OCI-LY7 (cell line): ENCODE measurements at regions of chrX and their contacts with region 1.

Region 1: GRCh38 chrX:83008415-83008814 is 499.7 kb upstream of the POU3F4 start:
- DNase-seq: peak; percentile 37
- H3K4me3 ChIP-seq: no peak overlapping the region
- H3K27ac ChIP-seq: no peak overlapping the region
- H3K4me1 ChIP-seq: no peaks in the 10 kb centered on the region
- CTCF ChIP-seq: peak; percentile 73

Region 2: GRCh38 chrX:83326539-83326938 is 318.1 kb after region 1 on chrX:
- CTCF ChIA-PET with region 1: no interaction called
- POLR2A ChIA-PET with region 1: no interaction called
- intact Hi-C with region 1: no loop called
- DNase-seq: no peak
- H3K4me3 ChIP-seq: no peak overlapping the region
- H3K27ac ChIP-seq: no peak overlapping the region
- H3K4me1 ChIP-seq: no peaks in the 10 kb centered on the region
- CTCF ChIP-seq: no peak

Region 3: GRCh38 chrX:83630662-83631061 is 622.2 kb after region 1 on chrX:
- CTCF ChIA-PET with region 1: no interaction called
- POLR2A ChIA-PET with region 1: no interaction called
- intact Hi-C with region 1: loop called (anchors 5 kb)
- DNase-seq: no peak
- H3K4me3 ChIP-seq: no peak overlapping the region
- H3K27ac ChIP-seq: no peak overlapping the region
- H3K4me1 ChIP-seq: peaks cover 25% of the 10 kb centered on the region
- CTCF ChIP-seq: no peak

Region 4: GRCh38 chrX:83759872-83760271 is 751.5 kb after region 1 on chrX:
- CTCF ChIA-PET with region 1: no interaction called
- POLR2A ChIA-PET with region 1: no interaction called
- intact Hi-C with region 1: loop called (anchors 10 kb)
- DNase-seq: peak; percentile 36
- H3K4me3 ChIP-seq: no peak overlapping the region
- H3K27ac ChIP-seq: no peak overlapping the region
- H3K4me1 ChIP-seq: no peaks in the 10 kb centered on the region
- CTCF ChIP-seq: peak; percentile 74